ENCODE measurements at regions of chr3 and their contacts with region 1.

Region 1: GRCh38 chr3:13895155-13896105 is 15.6 kb upstream of the WNT7A start:
- DNase-seq: peak; percentile 87 to 98 (median 92)

Region 2: GRCh38 chr3:14124615-14125190 is 229.3 kb after region 1 on chr3 and contains the starts of genes CHCHD4 and TMEM43:
- intact Hi-C with region 1: loop called (anchors 2 kb)
- DNase-seq: peak; percentile 99 to 100 (median 100)

Region 3: DNA sequence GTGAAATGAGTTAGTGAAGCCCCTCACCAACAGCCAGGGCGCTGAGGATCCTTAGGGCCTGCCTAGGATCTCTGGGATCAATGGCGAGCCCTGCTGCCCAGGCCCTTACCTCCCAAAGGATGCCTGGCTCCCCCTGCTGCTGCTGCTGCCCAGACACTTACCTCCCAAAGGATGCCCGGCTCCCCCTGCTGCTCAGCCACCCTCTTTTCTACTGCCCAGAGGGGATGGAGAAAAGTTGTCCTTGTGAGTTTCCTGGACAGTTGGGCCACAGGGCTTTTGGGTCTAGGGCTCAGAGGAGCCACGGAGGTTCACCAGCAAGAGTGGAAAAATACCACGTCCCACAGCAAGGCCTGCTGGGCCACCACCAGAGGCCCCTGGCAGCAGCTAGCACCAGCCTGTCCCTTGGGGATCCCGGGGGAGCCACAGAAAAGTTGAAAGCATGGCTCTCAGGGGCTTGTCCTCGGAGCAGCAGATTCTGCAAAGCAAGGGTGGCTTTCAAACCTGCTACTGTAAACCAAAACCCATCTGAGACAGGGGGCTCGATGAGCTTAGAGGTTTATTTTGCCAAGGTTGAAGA is 566.4 kb after region 1 on chr3:
- intact Hi-C with region 1: loop called (anchors 10 kb)
- DNase-seq: peak in 9 of 10 donors; percentile 37 to 94 (median 66)

Measured in posterior cingulate gyrus (tissue), 11 donors.